Naive thymus-derived CD4-positive, alpha-beta T cell (primary cell): ENCODE measurements at regions of chr12 and their contacts with region 1.

Region 1: GRCh38 chr12:64610149-64610678 is at the start of gene RASSF3:
- DNase-seq: peak; percentile 58 to 85 (median 75)
- ATAC-seq: peak; percentile 76
- H3K4me3 ChIP-seq: peak within 1 kb of the TSS; percentile 93
- H3K4me3 Mint-ChIP-seq: peak within 1 kb of the TSS; percentile 93 to 100 (median 97)
- H3K27ac ChIP-seq: peak within 1 kb of the TSS; percentile 89
- H3K27ac Mint-ChIP-seq: peak within 1 kb of the TSS; percentile 90 to 97 (median 95)
- H3K4me1 ChIP-seq: peaks cover 28 to 29% of the 10 kb centered on the region in 2 donors
- H3K4me1 Mint-ChIP-seq: peaks cover 30 to 50% (median 41%) of the 10 kb centered on the region in 7 donors
- H3K27me3 ChIP-seq: no peaks in the 10 kb centered on the region
- H3K27me3 Mint-ChIP-seq: no peaks in the 10 kb centered on the region
- total RNA-seq, gene RASSF3: 79.0 to 200 (median 107) TPM

Region 2: DNA sequence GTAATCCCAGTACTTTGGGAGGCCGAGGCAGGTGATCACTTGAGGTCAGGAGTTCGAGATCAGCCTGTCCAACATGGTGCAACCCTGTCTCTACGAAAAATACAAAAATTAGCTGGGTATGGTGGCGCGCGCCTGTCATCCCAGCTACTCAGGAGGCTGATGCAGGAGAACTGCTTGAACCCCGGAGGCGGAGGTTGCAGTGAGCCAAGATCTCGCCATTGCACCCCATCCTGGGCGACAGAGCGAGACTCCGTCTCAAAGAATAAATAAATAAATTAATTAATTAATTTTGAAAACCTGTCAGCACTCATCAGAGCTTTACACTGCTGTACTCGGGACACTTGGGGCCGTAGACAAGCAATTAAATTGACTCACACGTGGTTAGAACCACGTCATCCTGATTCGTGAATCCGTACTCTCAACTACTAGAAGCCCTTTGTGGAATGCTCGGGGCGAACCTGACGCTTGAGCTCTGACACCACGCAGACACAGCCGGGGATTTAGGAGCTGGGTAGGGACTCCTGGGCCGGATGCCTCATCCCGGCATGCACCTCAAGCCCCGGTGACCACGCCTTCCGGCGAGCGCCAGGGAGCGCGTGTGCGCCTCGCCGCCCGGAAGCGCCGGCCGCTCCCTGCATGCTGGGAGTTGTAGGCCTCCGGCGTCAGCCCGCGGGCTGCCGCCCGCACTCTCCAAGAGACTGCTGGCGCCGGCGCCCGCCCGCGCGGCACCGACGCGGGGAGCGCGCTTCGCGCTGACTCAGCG is 206.3 kb before region 1 on chr12 and contains the start of gene XPOT:
- CTCF ChIA-PET with region 1: no interaction called
- POLR2A ChIA-PET with region 1: interaction called, 3 read pairs
- intact Hi-C with region 1: loop called (anchors 1 kb)
- DNase-seq: peak; percentile 85 to 94 (median 92)
- ATAC-seq: peak; percentile 97
- H3K4me3 ChIP-seq: peak within 1 kb of the TSS; percentile 81
- H3K4me3 Mint-ChIP-seq: peak within 1 kb of the TSS; percentile 90 to 99 (median 96)
- H3K27ac ChIP-seq: peak within 1 kb of the TSS; percentile 82
- H3K27ac Mint-ChIP-seq: peak within 1 kb of the TSS; percentile 84 to 98 (median 95)
- H3K4me1 ChIP-seq: peaks cover 0 to 8% of the 10 kb centered on the region in 2 donors
- H3K4me1 Mint-ChIP-seq: peaks cover 8 to 41% (median 25%) of the 10 kb centered on the region in 7 donors
- H3K27me3 ChIP-seq: no peaks in the 10 kb centered on the region
- H3K27me3 Mint-ChIP-seq: no peaks in the 10 kb centered on the region
- total RNA-seq, gene XPOT: 46.6 to 118 (median 75.1) TPM

Region 3: DNA sequence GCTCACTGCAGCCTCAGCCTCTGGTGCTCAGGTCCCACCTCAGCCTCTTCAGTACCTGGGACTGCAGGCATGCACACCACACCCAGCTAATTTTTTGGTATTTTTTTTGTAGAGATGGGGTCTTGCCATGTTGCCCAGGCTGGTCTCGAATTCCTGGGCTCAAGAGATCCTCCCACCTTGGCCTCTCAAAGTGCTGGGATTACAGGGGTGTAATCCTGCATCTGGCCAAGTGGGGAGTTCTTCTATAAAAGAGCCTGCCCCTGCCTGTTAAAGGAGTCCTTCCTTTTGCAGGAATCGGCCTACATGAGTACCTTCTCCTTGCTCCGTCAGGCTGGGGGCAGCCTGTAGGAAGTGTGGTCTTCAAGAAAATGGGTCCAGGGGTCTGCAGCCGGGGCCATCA is 54.0 kb before region 1 on chr12:
- CTCF ChIA-PET with region 1: interaction called, 3 read pairs
- POLR2A ChIA-PET with region 1: interaction called, 3 read pairs
- intact Hi-C with region 1: loop called in 1 of 2 experiments (anchors 2 kb)
- DNase-seq: no peak
- ATAC-seq: no peak
- H3K4me3 ChIP-seq: no peak overlapping the region
- H3K4me3 Mint-ChIP-seq: no peak overlapping the region
- H3K27ac ChIP-seq: no peak overlapping the region
- H3K27ac Mint-ChIP-seq: no peak overlapping the region
- H3K4me1 ChIP-seq: no peaks in the 10 kb centered on the region
- H3K4me1 Mint-ChIP-seq: peaks cover 0 to 7% (median 0%) of the 10 kb centered on the region in 7 donors
- H3K27me3 ChIP-seq: no peaks in the 10 kb centered on the region
- H3K27me3 Mint-ChIP-seq: peaks cover 0 to 6% (median 0%) of the 10 kb centered on the region in 5 donors

Region 4: DNA sequence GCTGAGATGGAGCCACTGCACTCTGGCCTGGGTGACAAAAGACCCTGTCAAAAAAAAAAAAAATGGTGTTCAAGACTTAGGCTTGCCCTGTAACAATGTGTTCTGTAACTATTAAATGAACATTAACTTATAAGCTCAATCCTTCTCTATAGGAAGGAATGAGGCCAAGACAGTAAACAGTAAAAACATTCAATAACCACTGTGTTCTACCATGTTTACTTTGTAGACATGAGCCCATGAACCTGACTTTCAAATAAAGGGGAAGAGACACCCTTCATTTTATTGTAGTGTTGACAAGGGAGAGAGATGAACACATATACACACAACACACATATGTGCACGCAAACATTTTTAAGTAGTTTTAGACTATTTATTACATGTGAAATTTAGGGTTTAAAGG is 20.0 kb before region 1 on chr12:
- CTCF ChIA-PET with region 1: interaction called, 3 read pairs
- POLR2A ChIA-PET with region 1: interaction called, 73 read pairs
- intact Hi-C with region 1: no loop called
- DNase-seq: no peak
- ATAC-seq: no peak
- H3K4me3 ChIP-seq: no peak overlapping the region
- H3K4me3 Mint-ChIP-seq: no peak overlapping the region
- H3K27ac ChIP-seq: no peak overlapping the region
- H3K27ac Mint-ChIP-seq: no peak overlapping the region
- H3K4me1 ChIP-seq: peaks cover 0 to 1% of the 10 kb centered on the region in 2 donors
- H3K4me1 Mint-ChIP-seq: peaks cover 0 to 19% (median 9%) of the 10 kb centered on the region in 7 donors
- H3K27me3 ChIP-seq: no peaks in the 10 kb centered on the region
- H3K27me3 Mint-ChIP-seq: peaks cover 0 to 5% (median 0%) of the 10 kb centered on the region in 5 donors

Region 5: DNA sequence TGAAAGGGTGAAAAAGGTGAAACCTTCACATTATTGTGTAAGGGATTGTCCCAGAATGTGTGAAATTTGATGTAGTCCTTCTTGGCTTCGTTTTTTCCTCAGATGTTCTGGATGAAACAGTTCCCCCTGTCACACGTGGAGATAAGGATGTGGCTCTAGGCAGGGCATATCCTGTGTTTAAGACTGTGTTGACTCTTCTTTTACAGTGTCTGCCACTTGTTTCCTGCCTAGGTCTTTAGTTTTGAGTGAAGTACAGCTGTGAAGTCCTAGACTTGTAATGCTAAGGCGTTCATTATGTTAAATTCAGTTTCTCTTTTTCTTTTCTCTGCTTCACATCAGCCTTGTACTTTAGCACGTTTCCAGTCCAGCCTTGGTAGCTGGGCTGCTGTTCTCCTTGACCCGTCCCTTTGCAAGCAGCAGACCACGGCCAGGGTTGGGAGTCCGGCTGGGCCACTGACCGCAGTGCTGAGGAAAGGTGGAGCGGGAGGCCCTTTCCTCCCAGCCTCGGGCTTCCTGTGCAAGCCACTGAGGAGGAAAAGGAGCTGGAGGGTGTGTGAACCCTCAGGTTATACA is 59.1 kb after region 1 on chr12:
- CTCF ChIA-PET with region 1: interaction called, 10 read pairs
- POLR2A ChIA-PET with region 1: interaction called, 900 read pairs
- intact Hi-C with region 1: loop called (anchors 1 kb)
- DNase-seq: peak; percentile 26 to 87 (median 84)
- ATAC-seq: peak; percentile 93
- H3K4me3 ChIP-seq: peak overlapping the region; percentile 52
- H3K4me3 Mint-ChIP-seq: peak overlapping the region; percentile 85 to 98 (median 92)
- H3K27ac ChIP-seq: peak overlapping the region; percentile 72
- H3K27ac Mint-ChIP-seq: peak overlapping the region; percentile 91 to 99 (median 97)
- H3K4me1 ChIP-seq: peaks cover 89 to 90% of the 10 kb centered on the region in 2 donors
- H3K4me1 Mint-ChIP-seq: peaks cover 65 to 98% (median 90%) of the 10 kb centered on the region in 7 donors
- H3K27me3 ChIP-seq: no peaks in the 10 kb centered on the region
- H3K27me3 Mint-ChIP-seq: no peaks in the 10 kb centered on the region

Region 6: GRCh38 chr12:64759035-64759901 is 149.1 kb after region 1 on chr12 and contains the start of gene GNS:
- CTCF ChIA-PET with region 1: no interaction called
- POLR2A ChIA-PET with region 1: no interaction called
- intact Hi-C with region 1: loop called (anchors 1 kb)
- DNase-seq: peak; percentile 81 to 99 (median 86)
- ATAC-seq: peak; percentile 96
- H3K4me3 ChIP-seq: peak within 1 kb of the TSS; percentile 98
- H3K4me3 Mint-ChIP-seq: peak within 1 kb of the TSS; percentile 86 to 99 (median 96)
- H3K27ac ChIP-seq: peak within 1 kb of the TSS; percentile 77
- H3K27ac Mint-ChIP-seq: peak within 1 kb of the TSS; percentile 78 to 96 (median 91)
- H3K4me1 ChIP-seq: peaks cover 0 to 21% of the 10 kb centered on the region in 2 donors
- H3K4me1 Mint-ChIP-seq: peaks cover 17 to 60% (median 48%) of the 10 kb centered on the region in 7 donors
- H3K27me3 ChIP-seq: no peaks in the 10 kb centered on the region
- H3K27me3 Mint-ChIP-seq: peaks cover 0 to 4% (median 0%) of the 10 kb centered on the region in 5 donors
- total RNA-seq, gene GNS: 24.4 to 62.8 (median 35.2) TPM

Region 7: GRCh38 chr12:66301944-66302826 is 1692.0 kb after region 1 on chr12 and contains the start of gene HELB:
- CTCF ChIA-PET with region 1: no interaction called
- POLR2A ChIA-PET with region 1: no interaction called
- intact Hi-C with region 1: loop called in 1 of 2 experiments (anchors 5 kb)
- DNase-seq: peak; percentile 73 to 93 (median 84)
- ATAC-seq: peak; percentile 92
- H3K4me3 ChIP-seq: peak within 1 kb of the TSS; percentile 98
- H3K4me3 Mint-ChIP-seq: peak within 1 kb of the TSS; percentile 87 to 99 (median 97)
- H3K27ac ChIP-seq: peak within 1 kb of the TSS; percentile 91
- H3K27ac Mint-ChIP-seq: peak within 1 kb of the TSS; percentile 90 to 99 (median 98)
- H3K4me1 ChIP-seq: peaks cover 17 to 20% of the 10 kb centered on the region in 2 donors
- H3K4me1 Mint-ChIP-seq: peaks cover 25 to 63% (median 54%) of the 10 kb centered on the region in 7 donors
- H3K27me3 ChIP-seq: no peaks in the 10 kb centered on the region
- H3K27me3 Mint-ChIP-seq: peaks cover 0 to 5% (median 0%) of the 10 kb centered on the region in 5 donors
- total RNA-seq, gene HELB: 47.9 to 59.2 (median 54.0) TPM